Left cardiac atrium (tissue), 4 donors: ENCODE measurements at regions of chr22 and their contacts with region 1.

Region 1: GRCh38 chr22:38927033-38927781 is 30.2 kb upstream of the APOBEC3A start:
- DNase-seq: peak; percentile 79
- ATAC-seq: peak; percentile 73

Region 2: DNA sequence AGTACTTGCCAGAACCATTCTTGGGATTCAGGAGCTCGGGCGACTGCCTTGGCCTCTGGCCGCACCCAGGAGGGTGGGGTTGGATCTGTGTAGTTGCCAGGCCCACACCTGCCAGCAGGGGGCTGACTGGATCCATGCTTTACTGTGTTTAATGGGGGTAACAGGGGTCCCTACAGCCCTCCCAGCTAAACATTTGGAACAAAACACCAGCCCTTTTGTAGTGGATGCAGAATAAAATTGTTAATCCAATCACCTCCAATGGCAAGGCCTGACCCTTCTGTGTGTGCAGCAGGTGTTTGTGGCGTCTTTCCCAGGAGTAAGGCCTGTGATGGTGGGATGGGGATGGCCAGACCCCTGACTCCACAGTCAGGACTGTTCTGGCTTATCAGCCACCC is 193.9 kb before region 1 on chr22:
- intact Hi-C with region 1: no loop called
- DNase-seq: no peak
- ATAC-seq: peak; percentile 35 to 54

Region 3: DNA sequence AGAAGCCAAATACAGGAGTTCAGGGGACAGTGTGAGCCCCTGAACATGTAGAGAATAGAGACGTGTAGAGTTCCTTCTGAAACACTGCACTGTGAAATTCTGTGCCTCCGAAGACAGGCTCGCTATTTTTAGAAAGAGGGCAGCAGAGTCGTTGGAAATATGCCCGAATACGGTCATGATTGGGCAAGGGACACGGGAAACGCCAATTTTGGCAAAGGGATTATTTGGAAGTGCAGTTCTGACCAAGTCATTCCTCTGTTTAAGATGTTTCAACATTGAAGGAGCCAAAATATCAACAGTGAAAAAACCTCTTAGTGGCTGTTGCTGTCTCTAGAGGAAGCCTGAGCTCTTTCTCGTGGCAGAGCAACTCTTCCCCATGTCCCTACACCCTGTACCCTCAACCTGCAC is 45.7 kb before region 1 on chr22:
- intact Hi-C with region 1: loop called (anchors 5 to 10 kb)
- DNase-seq: peak; percentile 61
- ATAC-seq: peak; percentile 71 to 81

Region 4: DNA sequence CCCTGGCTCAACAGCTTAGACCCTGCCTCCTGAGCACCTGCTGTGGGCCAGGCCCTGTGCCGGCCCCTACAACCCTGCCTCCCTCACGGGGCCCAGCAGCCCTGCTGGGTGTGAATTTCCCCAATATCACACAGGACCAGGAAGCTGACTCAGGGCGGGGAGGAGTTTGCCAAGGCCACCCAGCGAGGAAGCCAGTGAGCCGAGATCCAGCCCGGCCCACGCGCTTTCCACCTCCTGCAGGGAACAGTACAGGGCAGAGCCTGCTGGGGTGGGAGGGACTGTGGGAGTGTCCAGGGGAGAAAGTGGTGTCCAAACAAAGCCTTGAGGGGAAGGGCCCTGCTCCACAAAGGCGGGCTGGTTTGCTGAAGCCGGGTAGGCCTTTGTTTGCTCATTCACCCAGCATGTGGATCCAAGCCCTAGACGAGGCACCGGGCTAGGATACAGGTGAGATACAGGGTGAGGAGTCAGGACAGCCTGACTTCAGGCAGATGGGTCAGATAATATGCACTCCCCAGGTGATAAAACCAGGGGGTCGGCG is 365.4 kb after region 1 on chr22:
- intact Hi-C with region 1: no loop called
- DNase-seq: peak; percentile 96
- ATAC-seq: peak; percentile 86 to 93